Left ventricle myocardium inferior (tissue), 1 donor: ENCODE measurements at regions of chr11 and their contacts with region 1.

Region 1: GRCh38 chr11:59097113-59097708 is 9.8 kb upstream of the FAM111B start:
- DNase-seq: peak; percentile 41
- H3K4me3 ChIP-seq: no peak overlapping the region
- H3K27ac ChIP-seq: no peak overlapping the region
- H3K4me1 ChIP-seq: peaks cover 6% of the 10 kb centered on the region
- H3K27me3 ChIP-seq: peaks cover 45% of the 10 kb centered on the region
- CTCF ChIP-seq: peak; percentile 75

Region 2: GRCh38 chr11:59158206-59159068 is 61.2 kb after region 1 on chr11:
- intact Hi-C with region 1: loop called (anchors 10 kb)
- DNase-seq: peak; percentile 18
- H3K4me3 ChIP-seq: no peak overlapping the region
- H3K27ac ChIP-seq: no peak overlapping the region
- H3K4me1 ChIP-seq: no peaks in the 10 kb centered on the region
- H3K27me3 ChIP-seq: peaks cover 8% of the 10 kb centered on the region
- CTCF ChIP-seq: peak; percentile 89